Stomach (tissue), 19 donors: ENCODE measurements at regions of chr15 and their contacts with region 1.

Region 1: DNA sequence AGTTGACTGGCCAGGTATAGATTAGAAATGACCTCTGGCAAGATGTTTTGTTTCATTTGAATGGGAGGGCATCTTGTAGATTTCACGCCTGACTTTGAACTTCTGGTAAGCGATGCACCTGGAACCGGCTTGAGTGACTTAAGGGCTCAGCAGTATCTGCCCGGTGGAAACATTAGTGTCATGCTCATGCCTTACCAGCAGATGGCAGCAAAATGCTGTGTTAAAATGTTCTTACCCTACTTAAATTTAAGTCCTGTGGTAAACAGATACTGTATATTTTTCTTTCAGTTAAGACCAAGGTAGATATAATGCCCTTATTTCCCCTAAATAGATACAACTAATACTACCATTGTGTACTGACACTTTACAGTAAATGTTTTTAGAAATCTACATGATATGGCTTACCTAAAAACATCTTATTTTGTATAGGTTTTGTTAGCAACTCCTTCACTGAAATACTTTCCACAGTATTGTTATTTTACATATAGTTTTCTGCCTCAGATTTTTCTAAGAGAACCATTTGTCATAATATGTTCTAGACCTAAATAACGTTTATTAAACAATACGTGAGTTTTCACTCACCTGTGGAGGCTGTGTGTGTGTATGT is 25.5 kb downstream of the ASB7 start:
- DNase-seq: peak; percentile 70 to 90
- H3K4me3 ChIP-seq: no peak overlapping the region
- H3K27ac ChIP-seq: no peak overlapping the region
- H3K4me1 ChIP-seq: peaks cover 0 to 7% (median 3%) of the 10 kb centered on the region in 4 donors
- H3K27me3 ChIP-seq: no peaks in the 10 kb centered on the region
- CTCF ChIP-seq: peak in 5 of 7 experiments; percentile 70 to 88 (median 81)
- EP300 ChIP-seq: no peak
- POLR2A ChIP-seq: no peak

Region 2: GRCh38 chr15:100500226-100500990 is 127.5 kb before region 1 on chr15:
- intact Hi-C with region 1: no loop called
- DNase-seq: peak in 1 of 2 donors; percentile 37
- H3K4me3 ChIP-seq: no peak overlapping the region
- H3K27ac ChIP-seq: no peak overlapping the region
- H3K4me1 ChIP-seq: no peaks in the 10 kb centered on the region
- H3K27me3 ChIP-seq: no peaks in the 10 kb centered on the region
- CTCF ChIP-seq: no peak
- EP300 ChIP-seq: no peak
- POLR2A ChIP-seq: no peak

Region 3: GRCh38 chr15:100537331-100537730 is 90.6 kb before region 1 on chr15:
- intact Hi-C with region 1: no loop called
- DNase-seq: no peak
- H3K4me3 ChIP-seq: no peak overlapping the region
- H3K27ac ChIP-seq: no peak overlapping the region
- H3K4me1 ChIP-seq: no peaks in the 10 kb centered on the region
- H3K27me3 ChIP-seq: peaks cover 0 to 2% (median 0%) of the 10 kb centered on the region in 3 donors
- CTCF ChIP-seq: no peak
- EP300 ChIP-seq: no peak
- POLR2A ChIP-seq: no peak

Region 4: GRCh38 chr15:100873029-100873677 is 245.3 kb after region 1 on chr15:
- intact Hi-C with region 1: loop called (anchors 5 kb)
- DNase-seq: peak; percentile 71 to 90
- H3K4me3 ChIP-seq: no peak overlapping the region
- H3K27ac ChIP-seq: no peak overlapping the region
- H3K4me1 ChIP-seq: no peaks in the 10 kb centered on the region
- H3K27me3 ChIP-seq: peaks cover 0 to 18% (median 11%) of the 10 kb centered on the region in 3 donors
- CTCF ChIP-seq: peak in 5 of 7 experiments; percentile 91 to 95 (median 93)
- EP300 ChIP-seq: no peak
- POLR2A ChIP-seq: no peak

Region 5: DNA sequence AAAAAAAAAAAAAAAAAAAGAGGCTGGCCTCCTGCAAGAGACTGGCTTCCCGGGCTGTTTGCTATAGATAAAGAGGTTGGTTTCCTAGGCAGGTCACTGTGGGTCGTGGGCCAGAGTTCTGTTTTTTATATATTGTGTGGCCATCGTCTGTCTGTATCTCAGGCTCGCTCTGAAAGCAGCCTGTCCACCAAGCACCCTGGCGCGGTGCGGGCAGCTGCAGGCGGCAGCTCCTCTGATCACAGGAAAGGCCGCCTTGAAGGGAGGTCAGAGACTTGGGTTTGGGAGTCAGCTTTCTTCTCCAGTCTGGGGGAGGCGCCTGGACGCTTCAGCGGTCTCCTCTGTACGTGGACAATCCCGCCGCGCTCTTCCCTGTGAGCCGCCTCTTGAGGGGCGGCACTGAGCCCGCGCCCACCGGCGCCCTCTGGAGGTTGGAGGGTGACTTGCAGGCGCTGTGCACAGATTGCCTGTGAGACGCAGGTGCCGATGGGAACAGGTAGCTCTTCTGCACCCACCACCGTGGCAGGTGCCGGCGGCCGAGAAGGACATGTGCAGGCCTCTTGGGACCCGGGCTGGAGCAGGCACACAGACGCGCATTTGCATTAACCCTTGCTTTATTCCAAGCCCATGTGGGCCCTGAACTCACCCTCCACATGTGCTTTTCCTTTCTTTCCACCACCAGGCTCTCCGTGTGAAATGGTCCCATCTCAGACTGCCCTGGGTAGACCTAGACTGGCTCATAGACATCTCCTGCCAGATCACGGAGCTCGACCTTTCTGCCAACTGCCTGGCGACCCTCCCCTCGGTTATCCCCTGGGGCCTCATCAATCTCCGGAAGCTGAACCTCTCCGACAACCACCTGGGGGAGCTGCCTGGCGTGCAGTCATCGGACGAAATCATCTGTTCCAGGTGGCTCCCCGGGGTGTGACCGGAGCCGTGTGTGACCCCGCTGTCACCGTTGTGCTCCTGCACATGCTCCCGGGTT is 380.6 kb after region 1 on chr15:
- intact Hi-C with region 1: loop called (anchors 5 kb)
- DNase-seq: peak; percentile 91 to 93
- H3K4me3 ChIP-seq: peak overlapping the region; percentile 45 to 59 (median 56)
- H3K27ac ChIP-seq: peak overlapping the region; percentile 53 to 62 (median 56)
- H3K4me1 ChIP-seq: peaks cover 12 to 24% (median 18%) of the 10 kb centered on the region in 4 donors
- H3K27me3 ChIP-seq: no peaks in the 10 kb centered on the region
- CTCF ChIP-seq: peak in 5 of 7 experiments; percentile 89 to 98 (median 94)
- EP300 ChIP-seq: no peak
- POLR2A ChIP-seq: no peak